Activated CD8-positive, alpha-beta T cell treated with anti-CD3 and anti-CD28 coated beads for 36 hours (primary cell): ENCODE measurements at regions of chr10 and their contacts with region 1.

Region 1: GRCh38 chr10:14564268-14564744 is 210.4 kb downstream of the FAM107B start:
- DNase-seq: peak; percentile 56
- ATAC-seq: peak; percentile 50
- H3K4me3 Mint-ChIP-seq: peak overlapping the region; percentile 56
- H3K27ac Mint-ChIP-seq: peak overlapping the region; percentile 92
- H3K4me1 Mint-ChIP-seq: peaks cover 85% of the 10 kb centered on the region
- H3K27me3 Mint-ChIP-seq: no peaks in the 10 kb centered on the region
- CTCF ChIP-seq: no peak

Region 2: DNA sequence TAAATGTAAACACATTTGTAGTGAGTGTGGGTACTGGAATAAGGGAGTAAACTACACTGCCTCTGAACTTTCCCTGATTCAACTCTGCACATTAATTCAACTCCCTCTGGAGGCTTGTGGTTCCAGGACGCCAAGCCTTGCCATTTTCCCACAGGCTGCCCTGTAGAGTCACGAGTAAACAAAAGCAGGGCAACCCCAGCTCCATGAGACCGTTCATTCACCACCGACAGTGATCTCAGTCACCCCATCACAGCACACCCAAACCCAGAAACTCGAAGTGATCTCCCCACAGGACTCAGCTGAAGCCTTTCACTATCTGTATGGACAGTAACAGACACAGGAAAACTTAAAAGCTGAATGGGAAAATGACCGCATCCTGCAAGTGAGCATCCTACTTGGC is 14.8 kb before region 1 on chr10:
- CTCF ChIA-PET with region 1: interaction called, 23 read pairs
- POLR2A ChIA-PET with region 1: interaction called, 24 read pairs
- intact Hi-C with region 1: no loop called
- DNase-seq: no peak
- ATAC-seq: no peak
- H3K4me3 Mint-ChIP-seq: no peak overlapping the region
- H3K27ac Mint-ChIP-seq: peak overlapping the region; percentile 64
- H3K4me1 Mint-ChIP-seq: peaks cover 89% of the 10 kb centered on the region
- H3K27me3 Mint-ChIP-seq: no peaks in the 10 kb centered on the region
- CTCF ChIP-seq: no peak

Region 3: GRCh38 chr10:14583252-14583651 is 18.9 kb after region 1 on chr10:
- CTCF ChIA-PET with region 1: interaction called, 8 read pairs
- POLR2A ChIA-PET with region 1: interaction called, 21 read pairs
- intact Hi-C with region 1: loop called (anchors 1 kb)
- DNase-seq: peak; percentile 96
- ATAC-seq: peak; percentile 63
- H3K4me3 Mint-ChIP-seq: peak overlapping the region; percentile 54
- H3K27ac Mint-ChIP-seq: peak overlapping the region; percentile 97
- H3K4me1 Mint-ChIP-seq: peaks cover 87% of the 10 kb centered on the region
- H3K27me3 Mint-ChIP-seq: no peaks in the 10 kb centered on the region
- CTCF ChIP-seq: no peak

Region 4: GRCh38 chr10:14604181-14605142 is 40.2 kb after region 1 on chr10:
- CTCF ChIA-PET with region 1: interaction called, 4 read pairs
- POLR2A ChIA-PET with region 1: interaction called, 19 read pairs
- intact Hi-C with region 1: loop called (anchors 5 kb)
- DNase-seq: peak; percentile 73
- ATAC-seq: peak; percentile 57
- H3K4me3 Mint-ChIP-seq: peak overlapping the region; percentile 84
- H3K27ac Mint-ChIP-seq: peak overlapping the region; percentile 93
- H3K4me1 Mint-ChIP-seq: peaks cover 65% of the 10 kb centered on the region
- H3K27me3 Mint-ChIP-seq: no peaks in the 10 kb centered on the region
- CTCF ChIP-seq: no peak

Region 5: DNA sequence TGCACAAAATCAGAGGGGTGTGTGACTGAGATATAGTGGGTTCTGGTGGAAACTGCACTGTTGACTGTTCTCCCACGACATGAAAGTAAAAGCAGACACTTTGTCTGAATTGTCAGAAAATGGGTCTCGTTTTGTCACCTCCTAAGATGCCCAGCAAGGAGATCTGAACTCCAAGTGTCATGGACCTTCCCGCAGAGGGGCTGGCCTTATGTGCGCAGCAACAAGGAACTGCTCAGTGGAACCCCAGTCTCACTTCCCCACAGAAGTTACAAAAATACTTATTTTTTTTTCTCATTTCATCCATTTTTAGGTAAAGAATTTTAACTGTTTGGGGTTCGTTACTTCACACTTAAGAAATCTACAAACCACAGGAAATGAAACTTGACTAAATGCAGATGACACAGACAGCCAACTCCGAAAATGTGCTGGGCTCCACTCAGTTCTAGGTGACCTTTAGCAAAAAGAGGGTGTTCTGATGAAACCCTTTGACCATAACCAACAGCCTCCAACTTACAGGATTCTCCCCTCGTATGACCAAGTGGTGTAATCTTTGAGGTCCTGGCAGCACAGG is 95.4 kb after region 1 on chr10:
- CTCF ChIA-PET with region 1: interaction called, 3 read pairs
- POLR2A ChIA-PET with region 1: no interaction called
- intact Hi-C with region 1: loop called (anchors 2 kb)
- DNase-seq: peak; percentile 75
- ATAC-seq: peak; percentile 89
- H3K4me3 Mint-ChIP-seq: peak overlapping the region; percentile 53
- H3K27ac Mint-ChIP-seq: peak overlapping the region; percentile 96
- H3K4me1 Mint-ChIP-seq: peaks cover 61% of the 10 kb centered on the region
- H3K27me3 Mint-ChIP-seq: no peaks in the 10 kb centered on the region
- CTCF ChIP-seq: no peak